ENCODE measurements at regions of chr7 and their contacts with region 1.

Region 1: GRCh38 chr7:107725151-107725740 is 18.7 kb upstream of the CBLL1 start:
- DNase-seq: peak; percentile 71
- H3K4me3 ChIP-seq: no peak overlapping the region
- H3K27ac ChIP-seq: no peak overlapping the region
- H3K4me1 ChIP-seq: no peaks in the 10 kb centered on the region
- H3K27me3 ChIP-seq: no peaks in the 10 kb centered on the region
- CTCF ChIP-seq: peak; percentile 97
- EP300 ChIP-seq: no peak
- RAD21 ChIP-seq: peak; percentile 94

Region 2: DNA sequence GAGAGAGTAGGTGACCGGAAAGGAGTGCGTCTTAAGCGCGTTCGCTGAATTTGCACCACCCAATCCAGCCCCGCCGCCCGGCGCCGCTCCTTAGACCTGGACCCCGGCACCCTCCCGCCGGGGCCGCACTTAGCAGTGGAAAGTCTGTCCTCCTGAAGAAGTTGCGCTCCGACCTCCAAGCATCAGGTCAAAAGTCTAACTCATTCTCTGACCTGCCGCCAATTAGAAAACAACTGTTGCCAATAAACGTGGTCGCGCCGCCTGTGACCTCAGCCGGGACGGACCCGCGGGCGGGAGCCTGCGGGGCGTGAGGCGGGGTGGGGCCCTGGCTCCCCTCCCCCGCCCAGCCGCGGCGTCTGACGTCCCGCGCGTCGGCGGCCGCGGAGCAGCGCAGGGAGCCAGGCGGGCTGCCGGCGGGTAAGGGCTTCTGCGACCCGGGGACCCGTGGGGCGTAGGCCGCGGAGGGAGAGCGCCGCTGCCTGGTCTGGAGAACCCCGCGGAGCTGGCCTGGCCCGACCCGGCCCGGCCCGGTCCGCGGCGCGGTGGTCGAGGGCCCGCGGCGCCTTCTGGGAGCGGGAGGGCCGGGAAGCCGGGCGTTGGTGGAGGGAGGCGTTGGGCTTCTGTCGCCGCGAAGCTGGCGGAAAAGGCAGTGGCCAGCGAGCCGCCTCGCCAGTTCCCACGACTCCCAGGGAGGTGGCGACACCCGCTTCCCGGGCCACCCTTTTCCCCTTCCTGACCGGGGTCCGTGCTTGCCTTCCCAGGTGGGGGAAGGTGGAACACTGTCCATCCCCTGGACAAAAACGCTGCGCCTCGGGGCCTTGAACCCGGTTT is 145.1 kb before region 1 on chr7 and contains the start of gene BCAP29:
- CTCF ChIA-PET with region 1: interaction called, 11 read pairs
- POLR2A ChIA-PET with region 1: no interaction called
- DNase-seq: peak; percentile 96
- H3K4me3 ChIP-seq: peak within 1 kb of the TSS; percentile 77 to 98
- H3K27ac ChIP-seq: peak within 1 kb of the TSS; percentile 68 to 95
- H3K4me1 ChIP-seq: peaks cover 12 to 23% of the 10 kb centered on the region in 2 experiments; a peak in 2 of 4 replicates
- H3K27me3 ChIP-seq: no peaks in the 10 kb centered on the region
- CTCF ChIP-seq: peak; percentile 41
- EP300 ChIP-seq: peak in 1 of 2 experiments; percentile 33; a peak in 1 of 4 replicates
- RAD21 ChIP-seq: peak; percentile 66
- polyA plus RNA-seq, gene BCAP29: 29.2 and 46.2 TPM in 2 replicates

Region 3: GRCh38 chr7:107668296-107668695 is 57.0 kb before region 1 on chr7:
- CTCF ChIA-PET with region 1: no interaction called
- POLR2A ChIA-PET with region 1: no interaction called
- DNase-seq: no peak
- H3K4me3 ChIP-seq: no peak overlapping the region
- H3K27ac ChIP-seq: no peak overlapping the region
- H3K4me1 ChIP-seq: no peaks in the 10 kb centered on the region
- H3K27me3 ChIP-seq: no peaks in the 10 kb centered on the region; the same call in 1 of the 2 replicates
- CTCF ChIP-seq: no peak
- EP300 ChIP-seq: no peak
- RAD21 ChIP-seq: no peak

Region 4: DNA sequence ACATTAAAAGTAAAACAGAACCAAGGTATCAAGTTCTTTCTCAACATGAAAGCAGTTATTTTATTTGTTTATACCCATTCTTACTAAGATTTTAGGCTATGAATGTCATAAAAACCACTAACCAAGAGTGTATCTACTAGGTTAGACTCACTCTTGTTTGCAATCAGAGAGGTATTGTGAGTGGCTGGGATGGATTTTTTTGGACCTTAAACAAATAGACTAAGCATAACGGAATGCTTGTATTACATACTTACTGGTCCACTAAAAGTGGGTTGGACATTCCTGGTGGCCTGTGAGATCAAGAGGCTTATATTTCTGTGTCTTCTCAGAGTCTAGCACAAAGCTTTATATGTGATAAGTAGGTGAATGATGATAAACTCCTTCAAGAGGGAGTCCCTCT is 13.9 kb before region 1 on chr7:
- CTCF ChIA-PET with region 1: interaction called, 17 read pairs
- POLR2A ChIA-PET with region 1: no interaction called
- DNase-seq: no peak
- H3K4me3 ChIP-seq: no peak overlapping the region
- H3K27ac ChIP-seq: no peak overlapping the region
- H3K4me1 ChIP-seq: no peaks in the 10 kb centered on the region
- H3K27me3 ChIP-seq: no peaks in the 10 kb centered on the region
- CTCF ChIP-seq: no peak
- EP300 ChIP-seq: no peak
- RAD21 ChIP-seq: no peak